Left lung (tissue), 14 donors: ENCODE measurements at regions of chr10 and their contacts with region 1.

Region 1: GRCh38 chr10:88932539-88933256 is 19.9 kb downstream of the ACTA2 start:
- DNase-seq: peak in 3 of 4 donors; percentile 43 to 83 (median 64)
- ATAC-seq: peak; percentile 89
- H3K4me3 ChIP-seq: no peak overlapping the region
- H3K27ac ChIP-seq: no peak overlapping the region
- H3K4me1 ChIP-seq: peaks cover 0 to 20% of the 10 kb centered on the region in 2 donors
- H3K27me3 ChIP-seq: no peaks in the 10 kb centered on the region
- CTCF ChIP-seq: peak; percentile 85 to 86

Region 2: DNA sequence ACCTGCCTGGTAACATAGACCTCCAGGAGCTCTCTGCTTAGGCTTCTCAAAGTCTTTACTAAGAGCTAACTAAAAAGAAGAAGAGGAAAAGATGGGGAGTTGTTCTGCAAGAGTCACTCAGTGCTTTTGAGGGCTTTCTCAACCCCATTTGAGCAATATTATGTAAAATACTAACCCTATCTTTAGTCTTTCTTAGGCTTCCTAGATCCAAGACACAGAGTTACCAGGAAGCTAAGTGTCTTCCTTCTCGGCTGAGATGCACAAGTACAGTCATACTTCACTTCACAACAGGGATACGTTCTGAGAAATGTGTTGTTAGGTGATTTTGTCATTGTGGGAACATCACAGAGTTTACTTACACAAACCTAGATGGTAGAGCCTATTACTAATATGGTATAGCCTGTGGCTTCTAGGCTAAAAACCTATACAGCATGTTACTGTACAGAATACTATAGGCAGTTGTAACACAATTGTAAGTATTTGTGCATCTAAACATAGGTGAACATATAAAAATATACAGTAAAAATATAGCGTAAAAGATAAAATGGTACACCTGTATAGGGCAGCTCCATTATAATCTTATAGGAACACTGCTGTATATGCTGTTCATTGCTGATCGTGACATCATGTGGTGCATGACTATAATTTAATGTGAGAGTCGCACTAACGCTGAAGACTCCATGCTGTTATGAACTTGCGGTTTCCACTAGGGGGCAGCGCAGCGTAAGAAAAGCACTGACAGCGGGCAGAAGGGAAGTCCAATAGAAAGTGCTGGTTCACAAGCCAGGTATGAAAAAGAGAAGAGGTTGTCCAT is 97.4 kb before region 1 on chr10:
- intact Hi-C with region 1: loop called in 1 of 2 experiments (anchors 5 kb)
- DNase-seq: peak; percentile 82 to 91 (median 86)
- ATAC-seq: peak; percentile 99
- H3K4me3 ChIP-seq: no peak overlapping the region
- H3K27ac ChIP-seq: peak overlapping the region in 1 of 2 donors; percentile 61
- H3K4me1 ChIP-seq: peaks cover 2 to 44% of the 10 kb centered on the region in 2 donors
- H3K27me3 ChIP-seq: no peaks in the 10 kb centered on the region
- CTCF ChIP-seq: peak; percentile 85 to 91

Region 3: GRCh38 chr10:88986549-88987242 is 54.0 kb after region 1 on chr10:
- intact Hi-C with region 1: loop called in 1 of 2 experiments (anchors 5 kb)
- DNase-seq: peak in 1 of 4 donors; percentile 62
- ATAC-seq: no peak
- H3K4me3 ChIP-seq: no peak overlapping the region
- H3K27ac ChIP-seq: peak overlapping the region; percentile 11 to 35
- H3K4me1 ChIP-seq: peaks cover 10 to 39% of the 10 kb centered on the region in 2 donors
- H3K27me3 ChIP-seq: no peaks in the 10 kb centered on the region
- CTCF ChIP-seq: peak; percentile 56 to 72

Region 4: DNA sequence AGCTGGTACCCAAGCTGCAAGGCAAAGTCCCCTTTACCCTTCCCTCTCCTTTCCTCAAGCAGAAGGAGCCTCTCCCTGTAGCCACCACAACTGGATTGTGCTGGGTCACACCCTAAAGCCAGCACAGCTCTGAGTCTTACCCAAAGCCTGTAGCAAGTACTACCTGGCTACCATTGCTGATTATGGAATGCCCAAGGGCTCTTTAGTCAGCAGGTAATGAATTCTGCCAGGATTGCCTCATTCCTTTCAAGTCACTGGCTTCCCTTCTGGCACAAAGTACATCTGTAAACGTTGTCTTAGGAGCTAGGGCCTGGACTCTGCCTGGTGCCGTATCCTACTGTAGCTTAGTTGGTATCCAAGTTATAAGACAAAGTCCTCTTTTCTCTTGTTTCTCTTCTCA is 109.9 kb after region 1 on chr10:
- intact Hi-C with region 1: no loop called
- DNase-seq: no peak
- ATAC-seq: peak; percentile 97
- H3K4me3 ChIP-seq: no peak overlapping the region
- H3K27ac ChIP-seq: no peak overlapping the region
- H3K4me1 ChIP-seq: peaks cover 0 to 3% of the 10 kb centered on the region in 2 donors
- H3K27me3 ChIP-seq: no peaks in the 10 kb centered on the region
- CTCF ChIP-seq: no peak

Region 5: DNA sequence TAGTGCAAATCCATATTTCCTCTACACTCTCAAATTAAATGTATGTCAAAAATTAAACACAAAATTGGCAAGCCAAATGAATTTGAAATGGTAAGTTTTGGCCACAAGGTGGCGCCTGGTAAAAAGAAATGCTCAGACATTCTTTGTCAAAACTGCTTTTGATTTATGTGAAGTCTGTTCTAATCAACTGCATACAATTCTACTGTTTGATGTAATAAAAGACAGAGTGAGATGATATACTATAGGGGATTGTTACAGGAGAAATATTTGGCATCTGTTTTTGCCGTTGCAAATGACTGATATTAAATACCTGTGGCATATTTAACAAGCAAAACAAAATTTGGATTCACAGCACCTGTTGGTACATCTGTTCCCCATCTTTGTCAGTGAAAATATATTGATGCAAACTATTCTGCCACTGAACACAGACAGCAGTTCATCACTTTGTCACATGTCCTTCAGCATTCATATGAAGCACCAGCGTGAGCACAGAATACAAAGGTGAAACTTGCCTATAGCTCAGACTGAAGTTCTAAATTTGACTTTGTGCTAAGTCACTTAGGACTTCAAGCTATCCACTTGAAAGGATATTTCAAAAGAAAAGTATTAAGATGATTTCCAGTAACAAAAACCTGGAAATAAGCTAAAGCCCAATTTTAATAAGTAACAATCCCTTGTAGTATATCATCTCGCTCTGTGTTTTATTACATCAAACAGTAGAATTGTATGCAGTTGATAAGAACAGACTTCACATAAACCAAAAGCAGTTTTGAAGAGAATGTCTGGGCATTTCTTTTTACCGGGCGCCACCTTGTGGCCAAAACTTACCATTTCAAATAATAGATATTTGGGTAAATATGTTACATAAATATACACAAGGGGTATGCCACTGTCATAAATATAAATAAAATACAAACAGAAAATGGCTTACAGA is 284.6 kb after region 1 on chr10:
- intact Hi-C with region 1: loop called in 1 of 2 experiments (anchors 5 kb)
- DNase-seq: peak in 2 of 4 donors; percentile 59 to 72
- ATAC-seq: peak; percentile 67
- H3K4me3 ChIP-seq: no peak overlapping the region
- H3K27ac ChIP-seq: peak overlapping the region in 1 of 2 donors; percentile 27
- H3K4me1 ChIP-seq: peaks cover 5 to 12% of the 10 kb centered on the region in 2 donors
- H3K27me3 ChIP-seq: no peaks in the 10 kb centered on the region
- CTCF ChIP-seq: peak; percentile 68 to 86

Region 6: GRCh38 chr10:89233033-89233432 is 300.3 kb after region 1 on chr10:
- intact Hi-C with region 1: no loop called
- DNase-seq: no peak
- ATAC-seq: no peak
- H3K4me3 ChIP-seq: no peak overlapping the region
- H3K27ac ChIP-seq: no peak overlapping the region
- H3K4me1 ChIP-seq: peaks cover 0 to 13% of the 10 kb centered on the region in 2 donors
- H3K27me3 ChIP-seq: no peaks in the 10 kb centered on the region
- CTCF ChIP-seq: no peak